Caco-2 (cell line): ENCODE measurements at regions of chr16 and their contacts with region 1.

Region 1: GRCh38 chr16:75801307-75801706 is 75.0 kb upstream of the CPHXL start:
- DNase-seq: no peak
- H3K4me3 ChIP-seq: no peak overlapping the region
- H3K4me3 Mint-ChIP-seq: no peak overlapping the region
- H3K27ac Mint-ChIP-seq: no peak overlapping the region
- H3K4me1 ChIP-seq: no peaks in the 10 kb centered on the region
- H3K4me1 Mint-ChIP-seq: no peaks in the 10 kb centered on the region
- H3K27me3 ChIP-seq: no peaks in the 10 kb centered on the region
- H3K27me3 Mint-ChIP-seq: no peaks in the 10 kb centered on the region
- CTCF ChIP-seq: peak in 1 of 2 experiments; percentile 13

Region 2: DNA sequence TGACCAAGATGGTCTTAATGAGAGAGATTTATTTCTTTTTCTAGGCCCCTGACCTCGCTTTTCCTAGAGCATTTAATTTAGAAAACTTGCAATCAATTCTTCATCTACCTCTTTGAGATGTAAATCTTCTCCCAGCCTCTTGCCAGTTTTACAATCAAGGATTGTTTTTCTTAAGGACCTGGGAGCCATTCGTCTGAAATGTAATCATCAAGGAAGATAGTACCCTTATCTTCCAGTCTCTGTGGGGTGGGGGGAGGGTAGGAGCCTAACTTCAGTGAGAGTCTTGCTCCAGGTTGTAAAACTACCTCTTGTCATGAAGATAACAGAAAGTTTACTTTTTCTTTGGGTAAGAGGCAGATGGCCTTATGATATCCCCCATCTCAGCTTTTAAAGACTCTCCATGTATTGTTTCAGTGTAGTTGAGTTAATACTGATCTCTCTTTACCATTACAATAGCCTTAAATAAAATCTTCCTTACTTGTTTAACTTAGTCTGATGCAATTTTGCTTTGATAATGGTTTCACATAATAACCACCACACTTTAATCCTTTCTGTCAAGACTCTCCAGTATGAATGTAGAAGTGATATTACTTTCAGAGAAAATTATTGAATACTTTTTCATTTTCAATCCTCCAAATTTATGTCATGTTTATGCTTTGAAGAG is 35.2 kb after region 1 on chr16:
- CTCF ChIA-PET with region 1: no interaction called
- POLR2A ChIA-PET with region 1: no interaction called
- intact Hi-C with region 1: no loop called
- DNase-seq: peak in 1 of 2 experiments; percentile 40
- H3K4me3 ChIP-seq: no peak overlapping the region
- H3K4me3 Mint-ChIP-seq: peak overlapping the region; percentile 28
- H3K27ac Mint-ChIP-seq: peak overlapping the region; percentile 32
- H3K4me1 ChIP-seq: peaks cover 26% of the 10 kb centered on the region
- H3K4me1 Mint-ChIP-seq: peaks cover 27% of the 10 kb centered on the region
- H3K27me3 ChIP-seq: no peaks in the 10 kb centered on the region
- H3K27me3 Mint-ChIP-seq: no peaks in the 10 kb centered on the region
- CTCF ChIP-seq: no peak

Region 3: DNA sequence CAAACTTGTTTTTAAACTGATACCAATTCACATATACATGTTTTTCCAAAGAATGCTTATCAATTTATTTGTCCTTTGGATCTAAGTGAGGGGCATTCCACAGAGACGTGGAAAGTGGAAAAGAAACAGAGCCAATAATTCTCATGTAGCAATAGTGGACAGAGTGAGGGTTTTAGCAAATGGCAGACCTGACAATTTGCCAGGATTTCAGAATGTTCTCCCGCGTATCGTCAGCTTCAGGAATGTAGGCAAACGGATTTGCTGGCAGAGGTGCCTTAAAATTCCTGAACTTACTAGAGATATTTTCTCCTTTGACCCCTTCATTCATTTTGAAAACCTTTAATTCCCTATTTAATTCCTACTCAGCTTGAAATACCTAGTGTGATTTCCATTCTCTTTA is 118.4 kb after region 1 on chr16:
- CTCF ChIA-PET with region 1: no interaction called
- POLR2A ChIA-PET with region 1: no interaction called
- intact Hi-C with region 1: loop called (anchors 10 kb)
- DNase-seq: no peak
- H3K4me3 ChIP-seq: no peak overlapping the region
- H3K4me3 Mint-ChIP-seq: no peak overlapping the region
- H3K27ac Mint-ChIP-seq: no peak overlapping the region
- H3K4me1 ChIP-seq: 0 out of 2 replicates have a peak, but pooled peaks cover 3% of the 10 kb centered on the region
- H3K4me1 Mint-ChIP-seq: peaks cover 19% of the 10 kb centered on the region
- H3K27me3 ChIP-seq: no peaks in the 10 kb centered on the region
- H3K27me3 Mint-ChIP-seq: no peaks in the 10 kb centered on the region
- CTCF ChIP-seq: no peak

Region 4: DNA sequence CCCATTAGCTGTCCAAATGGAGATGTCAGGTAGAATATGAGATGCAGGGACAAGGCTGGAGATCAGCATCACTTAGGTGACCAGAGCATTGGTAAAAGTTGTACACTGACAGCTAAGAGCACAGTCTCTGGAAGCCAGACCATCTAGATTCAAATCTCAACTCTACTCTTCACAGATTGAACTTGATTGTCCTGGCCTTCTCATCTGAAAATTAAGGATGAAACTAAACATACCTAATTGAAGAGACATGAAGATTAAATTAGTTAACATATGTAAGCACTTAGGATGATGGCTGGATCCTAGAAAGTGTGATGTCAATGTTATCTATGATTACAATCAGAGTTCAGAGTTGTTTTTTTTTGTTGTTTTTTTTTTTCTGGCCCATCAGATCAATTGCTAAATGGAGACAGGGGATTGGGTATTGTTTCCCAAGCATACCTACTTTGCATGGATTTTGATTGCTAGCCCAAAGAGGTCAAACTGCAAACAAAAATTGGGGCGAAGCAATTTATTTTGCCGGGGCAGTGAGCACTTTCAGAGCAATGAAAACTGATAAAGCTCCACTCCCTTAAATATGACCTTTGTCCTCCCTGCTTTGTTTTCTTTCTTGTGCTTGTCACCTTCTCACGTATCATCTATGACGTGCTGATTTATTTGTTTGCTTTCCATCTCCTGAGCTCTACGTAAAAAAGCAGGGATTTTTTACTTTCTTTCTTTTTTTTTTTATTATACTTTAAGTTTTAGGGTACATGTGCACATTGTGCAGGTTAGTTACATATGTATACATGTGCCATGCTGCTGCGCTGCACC is 142.6 kb after region 1 on chr16:
- CTCF ChIA-PET with region 1: no interaction called
- POLR2A ChIA-PET with region 1: no interaction called
- intact Hi-C with region 1: loop called (anchors 10 kb)
- DNase-seq: peak in 1 of 2 experiments; percentile 59
- H3K4me3 ChIP-seq: no peak overlapping the region
- H3K4me3 Mint-ChIP-seq: peak overlapping the region; percentile 59
- H3K27ac Mint-ChIP-seq: peak overlapping the region; percentile 12
- H3K4me1 ChIP-seq: peaks cover 37% of the 10 kb centered on the region
- H3K4me1 Mint-ChIP-seq: peaks cover 34% of the 10 kb centered on the region
- H3K27me3 ChIP-seq: no peaks in the 10 kb centered on the region
- H3K27me3 Mint-ChIP-seq: no peaks in the 10 kb centered on the region
- CTCF ChIP-seq: no peak

Region 5: GRCh38 chr16:76164970-76165558 is 363.8 kb after region 1 on chr16:
- CTCF ChIA-PET with region 1: no interaction called
- POLR2A ChIA-PET with region 1: no interaction called
- intact Hi-C with region 1: loop called (anchors 5 kb)
- DNase-seq: no peak
- H3K4me3 ChIP-seq: no peak overlapping the region
- H3K4me3 Mint-ChIP-seq: no peak overlapping the region
- H3K27ac Mint-ChIP-seq: no peak overlapping the region
- H3K4me1 ChIP-seq: no peaks in the 10 kb centered on the region
- H3K4me1 Mint-ChIP-seq: peaks cover 7% of the 10 kb centered on the region
- H3K27me3 ChIP-seq: no peaks in the 10 kb centered on the region
- H3K27me3 Mint-ChIP-seq: no peaks in the 10 kb centered on the region
- CTCF ChIP-seq: no peak

Region 6: GRCh38 chr16:76278980-76279379 is 477.7 kb after region 1 on chr16:
- CTCF ChIA-PET with region 1: no interaction called
- POLR2A ChIA-PET with region 1: no interaction called
- intact Hi-C with region 1: loop called (anchors 1 kb)
- DNase-seq: peak in 1 of 2 experiments; percentile 26
- H3K4me3 ChIP-seq: no peak overlapping the region
- H3K4me3 Mint-ChIP-seq: no peak overlapping the region
- H3K27ac Mint-ChIP-seq: no peak overlapping the region
- H3K4me1 ChIP-seq: no peaks in the 10 kb centered on the region
- H3K4me1 Mint-ChIP-seq: no peaks in the 10 kb centered on the region
- H3K27me3 ChIP-seq: no peaks in the 10 kb centered on the region
- H3K27me3 Mint-ChIP-seq: no peaks in the 10 kb centered on the region
- CTCF ChIP-seq: peak; percentile 32 to 44

Region 7: DNA sequence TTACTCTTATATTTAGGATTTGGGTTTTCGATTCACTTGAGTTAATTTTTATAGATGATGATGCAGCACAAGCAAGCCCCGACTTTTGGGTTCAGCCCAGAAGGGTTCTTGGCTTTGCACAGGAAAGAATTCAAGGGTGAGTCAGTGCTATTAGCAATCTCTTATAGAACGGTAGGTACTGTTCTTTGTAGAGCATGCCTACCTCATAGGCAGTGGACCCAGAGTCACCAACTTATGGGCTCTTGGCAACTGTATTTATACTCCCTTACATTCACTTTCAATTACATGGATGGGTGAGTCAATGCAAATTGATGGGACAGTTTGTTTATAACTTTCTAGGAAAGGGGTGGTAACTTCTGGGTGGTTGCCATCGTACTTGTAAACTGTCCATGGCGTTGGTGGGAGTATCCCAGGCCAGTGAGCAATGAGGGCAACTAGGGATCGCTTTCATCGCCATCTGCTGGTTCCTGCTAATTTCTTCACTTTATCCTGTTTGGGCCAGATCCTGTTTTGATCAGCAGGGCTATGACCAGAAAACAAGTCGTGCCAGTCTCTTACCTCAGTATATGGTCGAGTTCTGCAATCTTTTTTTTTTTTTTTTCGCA is 838.5 kb after region 1 on chr16:
- CTCF ChIA-PET with region 1: no interaction called
- POLR2A ChIA-PET with region 1: no interaction called
- intact Hi-C with region 1: loop called (anchors 2 kb)
- DNase-seq: peak; percentile 64 to 70
- H3K4me3 ChIP-seq: no peak overlapping the region
- H3K4me3 Mint-ChIP-seq: no peak overlapping the region
- H3K27ac Mint-ChIP-seq: no peak overlapping the region
- H3K4me1 ChIP-seq: no peaks in the 10 kb centered on the region
- H3K4me1 Mint-ChIP-seq: no peaks in the 10 kb centered on the region
- H3K27me3 ChIP-seq: no peaks in the 10 kb centered on the region
- H3K27me3 Mint-ChIP-seq: no peaks in the 10 kb centered on the region
- CTCF ChIP-seq: peak; percentile 48 to 69

Region 8: DNA sequence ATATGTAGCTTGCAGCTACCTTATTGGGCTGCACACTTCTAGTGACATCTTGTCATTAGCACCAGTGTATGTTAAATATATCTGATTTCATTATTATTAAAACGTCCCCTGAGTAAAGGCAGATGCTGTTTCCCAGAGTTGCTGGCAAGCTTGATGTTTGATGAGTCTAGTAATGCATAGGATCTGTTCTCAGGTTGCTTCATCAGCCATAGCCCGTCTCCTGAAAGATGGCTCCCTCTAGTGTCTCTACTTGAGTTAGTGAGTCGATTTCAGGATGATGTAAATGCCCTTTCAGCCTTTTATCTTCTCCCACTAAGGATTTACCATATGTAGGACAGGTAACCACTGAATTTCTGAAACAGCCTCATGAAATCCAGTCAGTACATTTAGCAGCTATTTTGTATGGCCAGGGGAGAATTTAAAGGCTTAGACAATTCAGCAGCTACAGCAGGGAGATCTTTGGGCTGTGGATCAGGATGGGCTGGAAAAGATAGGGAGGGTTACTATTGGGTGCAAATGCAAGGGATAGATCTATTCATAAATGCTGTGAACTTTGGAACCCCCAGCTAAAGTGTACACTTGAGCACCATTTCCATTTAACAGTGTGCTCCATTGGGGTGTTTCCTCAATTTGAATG is 852.2 kb after region 1 on chr16:
- CTCF ChIA-PET with region 1: interaction called, 7 read pairs
- POLR2A ChIA-PET with region 1: no interaction called
- intact Hi-C with region 1: loop called (anchors 2 kb)
- DNase-seq: peak; percentile 50 to 73
- H3K4me3 ChIP-seq: no peak overlapping the region
- H3K4me3 Mint-ChIP-seq: no peak overlapping the region
- H3K27ac Mint-ChIP-seq: no peak overlapping the region
- H3K4me1 ChIP-seq: no peaks in the 10 kb centered on the region; the same call in 1 of the 2 replicates
- H3K4me1 Mint-ChIP-seq: peaks cover 16% of the 10 kb centered on the region
- H3K27me3 ChIP-seq: no peaks in the 10 kb centered on the region
- H3K27me3 Mint-ChIP-seq: peaks cover 2% of the 10 kb centered on the region
- CTCF ChIP-seq: peak; percentile 75 to 86